ENCODE measurements at regions of chr12 and their contacts with region 1.

Region 1: GRCh38 chr12:109804820-109805761 is 28.1 kb downstream of the TRPV4 start:
- DNase-seq: peak; percentile 50 to 83 (median 64)
- ATAC-seq: peak; percentile 62 to 86 (median 82)
- H3K4me3 ChIP-seq: no peak overlapping the region
- H3K27ac ChIP-seq: no peak overlapping the region
- H3K4me1 ChIP-seq: peaks cover 0 to 2% (median 0%) of the 10 kb centered on the region in 12 donors
- H3K27me3 ChIP-seq: no peaks in the 10 kb centered on the region
- CTCF ChIP-seq: peak; percentile 91 to 99 (median 98)
- POLR2A ChIP-seq: no peak

Region 2: GRCh38 chr12:109739747-109740693 is 65.1 kb before region 1 on chr12:
- intact Hi-C with region 1: no loop called
- DNase-seq: peak in 4 of 5 donors; percentile 6 to 33 (median 16)
- ATAC-seq: no peak
- H3K4me3 ChIP-seq: no peak overlapping the region
- H3K27ac ChIP-seq: no peak overlapping the region
- H3K4me1 ChIP-seq: peaks cover 0 to 26% (median 4%) of the 10 kb centered on the region in 12 donors
- H3K27me3 ChIP-seq: no peaks in the 10 kb centered on the region
- CTCF ChIP-seq: peak in 3 of 12 donors; percentile 29 to 37 (median 29)
- POLR2A ChIP-seq: no peak

Region 3: DNA sequence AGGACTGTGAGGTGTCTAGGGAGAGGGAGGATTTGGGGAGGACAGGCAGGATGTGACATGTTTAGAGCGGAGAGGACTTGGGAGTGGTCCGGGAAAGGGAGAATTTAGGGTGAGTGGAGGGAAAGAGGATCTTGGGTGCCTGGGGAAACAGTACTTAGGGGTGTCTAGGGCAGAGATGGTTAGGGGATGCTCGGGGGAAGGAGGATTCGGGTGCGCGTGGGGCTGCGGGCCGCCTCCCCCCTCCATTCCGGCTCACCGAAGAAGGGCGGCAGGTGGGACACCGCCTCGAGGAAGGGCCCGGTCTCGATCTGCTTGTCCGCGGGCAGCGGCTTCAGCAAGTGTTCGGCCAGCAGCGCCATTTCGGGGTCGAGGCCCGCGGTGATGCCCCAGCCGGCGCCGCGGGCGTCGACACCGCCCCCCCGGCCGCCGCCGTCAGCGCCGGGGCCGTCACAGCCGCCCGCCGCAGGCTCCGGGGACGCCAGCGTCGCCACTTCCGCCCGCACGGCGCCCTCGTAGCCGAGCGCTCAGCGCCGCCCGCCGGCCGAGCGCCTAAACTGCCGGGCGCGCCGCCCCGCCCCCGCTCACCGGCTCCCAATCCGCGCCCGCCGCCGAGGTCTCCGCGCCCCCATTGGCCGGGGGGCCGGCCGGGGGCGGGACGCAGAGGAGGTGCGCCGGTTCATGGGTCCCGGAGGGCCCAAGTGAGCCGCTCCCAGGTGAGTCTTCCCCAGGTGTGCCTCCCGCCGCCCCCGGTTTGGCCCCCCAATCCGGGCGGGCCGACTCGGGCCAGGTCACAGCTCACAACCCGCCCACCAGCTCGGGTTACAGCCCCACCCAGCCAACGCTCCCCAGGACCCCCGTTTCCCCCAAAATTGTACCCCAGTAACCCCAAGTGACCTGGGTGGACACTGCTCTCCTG is 75.2 kb after region 1 on chr12 and contains the start of gene GLTP:
- intact Hi-C with region 1: loop called (anchors 1 to 2 kb)
- DNase-seq: peak; percentile 89 to 94 (median 89)
- ATAC-seq: peak; percentile 88 to 98 (median 96)
- H3K4me3 ChIP-seq: peak within 1 kb of the TSS; percentile 60 to 93 (median 80)
- H3K27ac ChIP-seq: peak within 1 kb of the TSS in 11 of 12 donors; percentile 54 to 87 (median 77)
- H3K4me1 ChIP-seq: peaks cover 0 to 35% (median 16%) of the 10 kb centered on the region in 12 donors
- H3K27me3 ChIP-seq: no peaks in the 10 kb centered on the region
- CTCF ChIP-seq: peak in 11 of 12 donors; percentile 13 to 88 (median 68)
- POLR2A ChIP-seq: peak in 1 of 2 donors; percentile 52
- total RNA-seq, gene GLTP: 18.0 to 68.6 (median 25.1) TPM